IMR-90 (cell line): ENCODE measurements at regions of chr16 and their contacts with region 1.

Region 1: GRCh38 chr16:69276148-69277115 is 34.7 kb upstream of the VPS4A start:
- DNase-seq: peak; percentile 98
- ATAC-seq: peak; percentile 93
- H3K4me3 ChIP-seq: no peak overlapping the region
- H3K27ac ChIP-seq: peak overlapping the region; percentile 85; the same call in 1 of the 2 replicates
- H3K4me1 ChIP-seq: peaks cover 8% of the 10 kb centered on the region
- H3K27me3 ChIP-seq: no peaks in the 10 kb centered on the region
- CTCF ChIP-seq: no peak
- POLR2A ChIP-seq: no peak
- RAD21 ChIP-seq: no peak

Region 2: GRCh38 chr16:69141936-69142335 is 134.5 kb before region 1 on chr16:
- CTCF ChIA-PET with region 1: no interaction called
- POLR2A ChIA-PET with region 1: no interaction called
- dilution Hi-C with region 1: no loop called
- in situ Hi-C with region 1: no loop called
- intact Hi-C with region 1: no loop called
- DNase-seq: no peak
- ATAC-seq: no peak
- H3K4me3 ChIP-seq: no peak overlapping the region
- H3K27ac ChIP-seq: no peak overlapping the region
- H3K4me1 ChIP-seq: peaks cover 2% of the 10 kb centered on the region; the same call in 1 of the 2 replicates
- H3K27me3 ChIP-seq: no peaks in the 10 kb centered on the region
- CTCF ChIP-seq: no peak
- POLR2A ChIP-seq: no peak
- RAD21 ChIP-seq: no peak

Region 3: DNA sequence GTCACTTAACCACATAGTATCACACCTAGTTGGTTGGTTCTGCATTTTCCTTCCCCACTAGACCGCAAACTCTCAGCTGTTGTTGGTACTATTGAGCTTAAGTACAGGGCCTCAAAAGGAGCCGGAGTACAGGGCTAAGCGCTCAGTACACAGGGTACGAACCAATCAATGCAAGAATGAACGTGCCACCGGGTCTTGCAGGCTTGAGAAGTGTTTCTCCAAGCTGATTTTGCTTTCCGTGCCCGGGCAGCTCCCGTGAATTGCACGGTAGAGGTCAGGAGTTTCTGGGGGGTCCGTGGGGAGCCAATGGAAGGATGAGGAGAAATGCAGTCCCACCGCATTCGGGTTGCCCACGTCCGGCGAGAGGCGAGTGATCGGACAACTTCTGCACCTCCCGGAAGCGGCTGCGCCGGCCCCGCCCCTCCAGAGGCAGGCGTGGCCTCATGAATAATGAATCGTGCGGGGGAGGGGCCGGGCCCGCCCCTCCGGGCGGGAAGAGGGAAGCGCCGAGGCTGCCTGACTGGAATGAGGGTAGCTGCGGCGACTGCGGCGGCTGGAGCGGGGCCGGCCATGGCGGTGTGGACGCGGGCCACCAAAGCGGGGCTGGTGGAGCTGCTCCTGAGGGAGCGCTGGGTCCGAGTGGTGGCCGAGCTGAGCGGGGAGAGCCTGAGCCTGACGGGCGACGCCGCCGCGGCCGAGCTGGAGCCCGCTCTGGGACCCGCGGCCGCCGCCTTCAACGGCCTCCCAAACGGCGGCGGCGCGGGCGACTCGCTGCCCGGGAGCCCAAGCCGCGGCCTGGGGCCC is 89.6 kb before region 1 on chr16 and contains the start of gene SNTB2:
- CTCF ChIA-PET with region 1: interaction called, 5 read pairs
- POLR2A ChIA-PET with region 1: interaction called, 12 read pairs
- dilution Hi-C with region 1: no loop called
- in situ Hi-C with region 1: loop called (anchors 5 kb)
- intact Hi-C with region 1: loop called (anchors 1 kb)
- DNase-seq: peak; percentile 83
- ATAC-seq: peak; percentile 95
- H3K4me3 ChIP-seq: peak within 1 kb of the TSS; percentile 83
- H3K27ac ChIP-seq: peak within 1 kb of the TSS; percentile 98
- H3K4me1 ChIP-seq: peaks cover 13% of the 10 kb centered on the region
- H3K27me3 ChIP-seq: no peaks in the 10 kb centered on the region
- CTCF ChIP-seq: no peak
- POLR2A ChIP-seq: peak; percentile 84
- RAD21 ChIP-seq: peak; percentile 17; the same call in 1 of the 2 replicates
- total RNA-seq, gene SNTB2: 47.5 and 58.0 TPM in 2 replicates

Region 4: GRCh38 chr16:69234460-69234859 is 42.0 kb before region 1 on chr16:
- CTCF ChIA-PET with region 1: no interaction called
- POLR2A ChIA-PET with region 1: no interaction called
- dilution Hi-C with region 1: no loop called
- in situ Hi-C with region 1: no loop called
- intact Hi-C with region 1: no loop called
- DNase-seq: no peak
- ATAC-seq: no peak
- H3K4me3 ChIP-seq: no peak overlapping the region
- H3K27ac ChIP-seq: no peak overlapping the region
- H3K4me1 ChIP-seq: peaks cover 12% of the 10 kb centered on the region
- H3K27me3 ChIP-seq: no peaks in the 10 kb centered on the region
- CTCF ChIP-seq: no peak
- POLR2A ChIP-seq: no peak
- RAD21 ChIP-seq: no peak

Region 5: DNA sequence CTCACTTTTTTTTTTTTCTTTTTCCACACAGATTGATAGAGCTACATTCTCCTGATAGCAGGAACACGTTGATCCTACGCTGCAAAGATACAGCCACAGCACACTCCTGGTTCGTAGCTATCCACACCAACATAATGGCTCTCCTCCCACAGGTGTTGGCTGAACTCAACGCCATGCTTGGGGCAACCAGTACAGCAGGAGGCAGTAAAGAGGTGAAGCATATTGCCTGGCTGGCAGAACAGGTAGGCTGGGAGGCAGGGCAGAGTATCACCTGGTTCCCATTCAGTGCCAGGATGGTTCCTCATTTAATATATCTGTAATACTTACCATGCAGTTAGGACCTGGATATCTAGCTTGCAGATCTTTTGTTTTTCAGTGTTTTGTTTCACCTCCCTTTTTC is 16.4 kb before region 1 on chr16:
- CTCF ChIA-PET with region 1: interaction called, 10 read pairs
- POLR2A ChIA-PET with region 1: interaction called, 3 read pairs
- dilution Hi-C with region 1: no loop called
- in situ Hi-C with region 1: no loop called
- intact Hi-C with region 1: no loop called
- DNase-seq: no peak
- ATAC-seq: no peak
- H3K4me3 ChIP-seq: no peak overlapping the region
- H3K27ac ChIP-seq: no peak overlapping the region
- H3K4me1 ChIP-seq: no peaks in the 10 kb centered on the region
- H3K27me3 ChIP-seq: no peaks in the 10 kb centered on the region
- CTCF ChIP-seq: no peak
- POLR2A ChIP-seq: no peak
- RAD21 ChIP-seq: no peak

Region 6: GRCh38 chr16:69286941-69287713 is 10.7 kb after region 1 on chr16:
- CTCF ChIA-PET with region 1: interaction called, 14 read pairs
- POLR2A ChIA-PET with region 1: no interaction called
- dilution Hi-C with region 1: no loop called
- in situ Hi-C with region 1: no loop called
- intact Hi-C with region 1: no loop called
- DNase-seq: peak; percentile 78
- ATAC-seq: peak; percentile 67
- H3K4me3 ChIP-seq: no peak overlapping the region
- H3K27ac ChIP-seq: peak overlapping the region; percentile 64; the same call in 1 of the 2 replicates
- H3K4me1 ChIP-seq: peaks cover 9% of the 10 kb centered on the region
- H3K27me3 ChIP-seq: no peaks in the 10 kb centered on the region
- CTCF ChIP-seq: peak; percentile 57
- POLR2A ChIP-seq: no peak
- RAD21 ChIP-seq: peak; percentile 63

Region 7: GRCh38 chr16:69363281-69363717 is 86.9 kb after region 1 on chr16:
- CTCF ChIA-PET with region 1: no interaction called
- POLR2A ChIA-PET with region 1: no interaction called
- dilution Hi-C with region 1: no loop called
- in situ Hi-C with region 1: no loop called
- intact Hi-C with region 1: no loop called
- DNase-seq: no peak
- ATAC-seq: no peak
- H3K4me3 ChIP-seq: no peak overlapping the region
- H3K27ac ChIP-seq: no peak overlapping the region
- H3K4me1 ChIP-seq: no peaks in the 10 kb centered on the region; the same call in 1 of the 2 replicates
- H3K27me3 ChIP-seq: no peaks in the 10 kb centered on the region
- CTCF ChIP-seq: no peak
- POLR2A ChIP-seq: no peak
- RAD21 ChIP-seq: no peak